ENCODE measurements at regions of chr17 and their contacts with region 1.

Region 1: GRCh38 chr17:4903051-4903818 is at the start of gene CHRNE:
- DNase-seq: peak; percentile 52 to 92 (median 79)
- ATAC-seq: peak; percentile 25
- H3K4me3 ChIP-seq: peak within 1 kb of the TSS; percentile 14 to 27
- H3K4me3 Mint-ChIP-seq: peak within 1 kb of the TSS; percentile 48
- H3K27ac ChIP-seq: peak within 1 kb of the TSS in 1 of 2 experiments; percentile 50
- H3K27ac Mint-ChIP-seq: peak within 1 kb of the TSS; percentile 76
- H3K4me1 ChIP-seq: peaks cover 51% of the 10 kb centered on the region
- H3K4me1 Mint-ChIP-seq: peaks cover 38% of the 10 kb centered on the region
- H3K27me3 ChIP-seq: no peaks in the 10 kb centered on the region
- H3K27me3 Mint-ChIP-seq: no peaks in the 10 kb centered on the region
- CTCF ChIP-seq: peak; percentile 94
- total RNA-seq, gene CHRNE: 5.5 to 6.1 TPM

Region 2: GRCh38 chr17:4948931-4949320 is 45.7 kb after region 1 on chr17:
- CTCF ChIA-PET with region 1: interaction called, 7 read pairs
- POLR2A ChIA-PET with region 1: interaction called, 24 read pairs
- intact Hi-C with region 1: loop called in 1 of 2 experiments (anchors 2 kb)
- DNase-seq: peak; percentile 44 to 90 (median 70)
- ATAC-seq: peak; percentile 26
- H3K4me3 ChIP-seq: peak overlapping the region; percentile 99 to 100
- H3K4me3 Mint-ChIP-seq: peak overlapping the region; percentile 94
- H3K27ac ChIP-seq: peak overlapping the region; percentile 72 to 81
- H3K27ac Mint-ChIP-seq: peak overlapping the region; percentile 93
- H3K4me1 ChIP-seq: peaks cover 38% of the 10 kb centered on the region
- H3K4me1 Mint-ChIP-seq: peaks cover 45% of the 10 kb centered on the region
- H3K27me3 ChIP-seq: no peaks in the 10 kb centered on the region
- H3K27me3 Mint-ChIP-seq: no peaks in the 10 kb centered on the region
- CTCF ChIP-seq: no peak

Region 3: DNA sequence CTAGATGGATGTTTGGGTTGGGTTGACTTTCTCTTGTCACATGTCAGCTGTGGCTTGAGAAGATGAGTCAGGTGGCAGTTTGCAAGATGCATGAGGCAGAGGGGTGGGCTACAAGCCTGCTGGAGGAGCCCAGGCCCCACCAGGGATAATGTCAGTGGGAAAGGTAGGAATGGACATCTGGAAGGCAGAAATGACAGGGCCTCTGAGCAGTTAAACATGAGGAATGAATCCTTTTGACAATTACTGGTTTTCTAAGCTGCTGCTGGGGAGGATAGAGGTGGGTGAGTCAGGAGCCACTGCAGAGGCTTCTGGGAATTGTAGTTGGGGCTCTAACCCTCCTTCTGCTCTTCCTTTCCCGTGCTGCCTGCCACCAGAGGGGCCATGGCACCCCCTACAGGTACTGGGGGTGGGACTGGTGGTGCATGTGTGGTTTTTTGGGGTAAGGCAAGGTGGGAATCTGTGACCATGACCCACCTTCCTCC is 116.3 kb after region 1 on chr17:
- CTCF ChIA-PET with region 1: no interaction called
- POLR2A ChIA-PET with region 1: no interaction called
- intact Hi-C with region 1: loop called in 1 of 2 experiments (anchors 1 kb)
- DNase-seq: peak in 8 of 9 experiments; percentile 32 to 68 (median 52)
- ATAC-seq: peak; percentile 95
- H3K4me3 ChIP-seq: no peak overlapping the region
- H3K4me3 Mint-ChIP-seq: no peak overlapping the region
- H3K27ac ChIP-seq: no peak overlapping the region
- H3K27ac Mint-ChIP-seq: peak overlapping the region; percentile 75
- H3K4me1 ChIP-seq: no peaks in the 10 kb centered on the region
- H3K4me1 Mint-ChIP-seq: peaks cover 7% of the 10 kb centered on the region
- H3K27me3 ChIP-seq: no peaks in the 10 kb centered on the region
- H3K27me3 Mint-ChIP-seq: no peaks in the 10 kb centered on the region
- CTCF ChIP-seq: no peak

Measured in CD8-positive, alpha-beta T cell (primary cell).